BJ (cell line): ENCODE measurements at regions of chr5 and their contacts with region 1.

Region 1: DNA sequence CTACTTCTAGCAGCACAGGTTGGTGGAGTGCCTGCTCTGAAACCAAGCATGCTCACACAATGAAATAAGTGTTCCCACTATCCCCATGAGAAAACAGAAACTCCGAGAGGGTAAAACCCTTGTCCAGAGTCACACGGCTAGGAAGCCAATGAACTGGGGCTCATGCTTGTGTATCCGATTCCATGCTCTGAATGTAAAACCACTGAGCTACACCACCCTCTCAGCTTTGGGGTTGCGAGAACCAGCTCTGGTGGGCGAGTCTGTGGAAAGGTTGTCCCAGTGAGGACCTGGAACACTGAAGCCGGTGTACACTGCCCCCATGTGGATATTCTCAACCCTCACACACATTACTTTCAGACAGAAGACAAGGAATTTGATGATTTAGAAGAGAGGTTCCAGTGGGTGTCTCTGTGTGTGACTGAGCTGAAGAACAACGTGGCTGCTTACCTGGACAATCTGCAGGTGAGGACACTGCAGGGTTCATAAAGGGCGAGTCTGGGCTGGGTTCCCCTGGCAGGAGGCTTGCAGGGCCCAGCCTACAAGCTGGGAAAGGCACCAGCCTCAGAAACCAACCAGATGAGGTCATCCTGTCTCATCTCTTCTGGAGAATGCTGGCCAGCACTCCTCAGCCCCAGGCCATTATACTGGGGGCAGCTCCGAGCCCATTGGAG is 37.4 kb downstream of the ARHGEF37 start:
- DNase-seq: peak; percentile 35
- H3K4me3 ChIP-seq: no peak overlapping the region
- H3K27me3 ChIP-seq: peaks cover 3% of the 10 kb centered on the region
- CTCF ChIP-seq: peak; percentile 77

Region 2: GRCh38 chr5:149011074-149011476 is 607.6 kb before region 1 on chr5:
- CTCF ChIA-PET with region 1: no interaction called
- POLR2A ChIA-PET with region 1: no interaction called
- DNase-seq: no peak
- H3K4me3 ChIP-seq: no peak overlapping the region
- H3K27me3 ChIP-seq: no peaks in the 10 kb centered on the region
- CTCF ChIP-seq: no peak

Region 3: GRCh38 chr5:149561848-149562247 is 56.9 kb before region 1 on chr5:
- CTCF ChIA-PET with region 1: interaction called, 23 read pairs
- POLR2A ChIA-PET with region 1: no interaction called
- DNase-seq: peak; percentile 80
- H3K4me3 ChIP-seq: no peak overlapping the region
- H3K27me3 ChIP-seq: no peaks in the 10 kb centered on the region
- CTCF ChIP-seq: no peak

Region 4: GRCh38 chr5:149581192-149581861 is 37.4 kb before region 1 on chr5 and contains the start of gene ARHGEF37:
- CTCF ChIA-PET with region 1: interaction called, 19 read pairs
- POLR2A ChIA-PET with region 1: no interaction called
- DNase-seq: no peak
- H3K4me3 ChIP-seq: peak within 1 kb of the TSS; percentile 39
- H3K27me3 ChIP-seq: no peaks in the 10 kb centered on the region
- CTCF ChIP-seq: no peak
- polyA plus RNA-seq, gene ARHGEF37: 0.42 and 0.92 TPM in 2 replicates

Region 5: DNA sequence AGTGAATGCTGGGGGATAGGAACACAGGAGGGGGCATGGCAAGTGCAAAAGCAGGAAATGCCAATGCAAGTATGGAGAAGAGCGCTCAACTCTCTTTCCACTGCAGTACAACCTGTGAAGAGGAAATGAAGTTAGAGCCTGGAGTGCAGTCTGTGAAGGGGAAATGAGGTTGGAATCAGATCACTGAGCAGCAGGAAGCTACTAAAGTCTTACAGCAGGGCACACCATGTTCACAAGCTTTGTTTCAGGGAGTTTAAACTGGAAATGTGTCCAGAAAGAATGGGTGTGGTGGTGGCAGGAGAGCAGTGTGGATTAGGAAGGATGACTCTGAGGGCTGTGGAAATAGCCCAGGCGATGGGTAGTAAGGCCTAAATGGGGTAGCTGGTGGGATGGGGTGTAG is 22.0 kb before region 1 on chr5:
- CTCF ChIA-PET with region 1: interaction called, 18 read pairs
- POLR2A ChIA-PET with region 1: no interaction called
- DNase-seq: no peak
- H3K4me3 ChIP-seq: no peak overlapping the region
- H3K27me3 ChIP-seq: no peaks in the 10 kb centered on the region
- CTCF ChIP-seq: no peak

Region 6: DNA sequence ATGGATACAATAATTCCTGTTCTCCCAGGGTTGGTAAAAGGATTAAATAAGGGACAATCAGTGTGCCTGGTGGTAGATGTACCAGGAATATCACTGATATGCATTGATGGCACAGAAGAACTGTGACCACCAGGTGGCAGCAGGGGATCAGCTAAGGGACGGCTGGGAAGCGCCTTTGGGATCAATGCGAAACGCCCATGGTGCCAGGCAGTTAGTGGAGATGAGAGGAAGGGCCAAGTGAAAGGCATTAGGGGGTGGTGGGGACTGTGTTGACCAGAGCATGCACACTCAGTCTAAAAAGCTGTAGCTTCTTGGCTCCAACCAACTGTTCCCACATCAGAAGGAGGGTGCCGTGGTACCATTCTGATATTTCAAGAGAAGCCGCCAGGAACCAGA is 18.1 kb after region 1 on chr5:
- CTCF ChIA-PET with region 1: interaction called, 32 read pairs
- POLR2A ChIA-PET with region 1: no interaction called
- DNase-seq: no peak
- H3K4me3 ChIP-seq: no peak overlapping the region
- H3K27me3 ChIP-seq: no peaks in the 10 kb centered on the region
- CTCF ChIP-seq: peak; percentile 83

Region 7: GRCh38 chr5:149656576-149657182 is 38.0 kb after region 1 on chr5:
- CTCF ChIA-PET with region 1: no interaction called
- POLR2A ChIA-PET with region 1: no interaction called
- DNase-seq: no peak
- H3K4me3 ChIP-seq: no peak overlapping the region
- H3K27me3 ChIP-seq: peaks cover 4% of the 10 kb centered on the region
- CTCF ChIP-seq: peak; percentile 55

Region 8: GRCh38 chr5:150361301-150361700 is 742.6 kb after region 1 on chr5:
- CTCF ChIA-PET with region 1: no interaction called
- POLR2A ChIA-PET with region 1: no interaction called
- DNase-seq: no peak
- H3K4me3 ChIP-seq: no peak overlapping the region
- H3K27me3 ChIP-seq: no peaks in the 10 kb centered on the region
- CTCF ChIP-seq: no peak